Activated CD8-positive, alpha-beta T cell treated with anti-CD3 and anti-CD28 coated beads for 36 hours (primary cell): ENCODE measurements at regions of chr15 and their contacts with region 1.

Region 1: DNA sequence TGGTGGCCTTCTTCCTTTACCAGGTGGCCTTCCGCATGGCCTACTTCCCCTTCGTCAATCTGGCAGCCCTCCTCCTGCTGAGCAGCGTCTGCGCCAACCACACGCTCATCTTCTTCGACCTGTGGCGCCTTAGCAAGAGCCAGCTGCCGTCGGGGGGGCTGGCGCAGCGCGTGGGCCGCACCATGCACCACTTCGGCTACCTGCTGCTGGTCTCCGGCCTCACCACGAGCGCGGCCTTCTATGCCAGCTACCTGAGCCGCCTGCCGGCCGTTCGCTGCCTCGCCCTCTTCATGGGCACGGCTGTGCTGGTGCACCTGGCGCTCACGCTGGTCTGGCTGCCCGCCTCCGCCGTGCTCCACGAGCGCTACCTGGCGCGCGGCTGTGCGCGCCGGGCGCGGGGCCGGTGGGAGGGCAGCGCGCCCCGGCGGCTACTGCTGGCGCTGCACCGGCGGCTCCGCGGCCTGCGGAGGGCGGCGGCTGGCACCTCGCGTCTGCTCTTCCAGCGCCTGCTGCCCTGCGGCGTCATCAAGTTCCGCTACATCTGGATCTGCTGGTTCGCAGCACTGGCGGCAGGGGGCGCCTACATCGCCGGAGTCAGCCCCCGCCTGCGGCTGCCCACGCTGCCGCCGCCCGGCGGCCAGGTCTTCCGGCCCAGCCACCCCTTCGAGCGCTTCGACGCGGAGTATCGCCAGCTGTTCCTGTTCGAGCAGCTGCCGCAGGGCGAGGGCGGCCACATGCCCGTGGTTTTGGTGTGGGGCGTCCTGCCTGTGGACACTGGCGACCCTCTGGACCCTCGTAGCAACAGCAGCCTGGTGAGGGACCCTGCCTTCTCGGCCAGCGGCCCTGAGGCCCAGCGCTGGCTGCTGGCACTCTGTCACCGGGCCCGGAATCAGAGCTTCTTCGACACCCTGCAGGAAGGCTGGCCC is 9.9 kb downstream of the DISP2 start:
- DNase-seq: peak; percentile 92
- ATAC-seq: peak; percentile 98
- H3K4me3 Mint-ChIP-seq: peak overlapping the region; percentile 82
- H3K27ac Mint-ChIP-seq: peak overlapping the region; percentile 79
- H3K4me1 Mint-ChIP-seq: peaks cover 20% of the 10 kb centered on the region
- H3K27me3 Mint-ChIP-seq: no peaks in the 10 kb centered on the region
- CTCF ChIP-seq: peak; percentile 96

Region 2: DNA sequence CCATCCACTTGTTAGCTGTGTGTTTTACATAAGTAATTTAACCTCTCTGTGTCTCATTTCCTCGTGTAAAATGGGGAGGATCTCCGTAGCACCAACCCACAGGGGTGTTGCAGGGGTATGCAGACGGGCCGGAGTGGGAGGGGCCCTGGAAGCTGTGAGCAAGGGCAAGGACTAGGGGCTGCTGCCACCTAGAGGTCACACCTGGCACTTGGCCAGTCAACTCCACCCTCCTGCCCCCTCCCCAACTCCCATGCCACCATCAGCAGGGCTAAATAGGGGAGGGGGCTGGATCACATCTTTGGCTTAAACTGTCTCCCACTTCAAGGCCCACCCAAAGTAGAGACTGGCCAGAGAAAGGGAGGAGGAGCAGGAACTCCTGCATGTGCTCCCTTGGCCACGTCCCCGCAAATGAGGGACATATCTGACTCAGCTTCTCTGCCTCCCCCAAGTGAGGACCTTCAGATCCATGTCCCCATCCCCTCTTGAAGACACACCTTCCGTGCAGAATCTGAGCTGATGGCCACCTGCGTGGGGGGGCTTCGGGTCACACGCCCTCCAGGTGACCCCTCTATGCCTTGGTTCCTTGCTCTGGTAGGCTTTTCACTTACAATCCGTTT is 29.8 kb before region 1 on chr15:
- CTCF ChIA-PET with region 1: interaction called, 83 read pairs
- POLR2A ChIA-PET with region 1: interaction called, 3 read pairs
- intact Hi-C with region 1: no loop called
- DNase-seq: peak; percentile 88
- ATAC-seq: peak; percentile 96
- H3K4me3 Mint-ChIP-seq: no peak overlapping the region
- H3K27ac Mint-ChIP-seq: no peak overlapping the region
- H3K4me1 Mint-ChIP-seq: peaks cover 14% of the 10 kb centered on the region
- H3K27me3 Mint-ChIP-seq: no peaks in the 10 kb centered on the region
- CTCF ChIP-seq: peak; percentile 92

Region 3: DNA sequence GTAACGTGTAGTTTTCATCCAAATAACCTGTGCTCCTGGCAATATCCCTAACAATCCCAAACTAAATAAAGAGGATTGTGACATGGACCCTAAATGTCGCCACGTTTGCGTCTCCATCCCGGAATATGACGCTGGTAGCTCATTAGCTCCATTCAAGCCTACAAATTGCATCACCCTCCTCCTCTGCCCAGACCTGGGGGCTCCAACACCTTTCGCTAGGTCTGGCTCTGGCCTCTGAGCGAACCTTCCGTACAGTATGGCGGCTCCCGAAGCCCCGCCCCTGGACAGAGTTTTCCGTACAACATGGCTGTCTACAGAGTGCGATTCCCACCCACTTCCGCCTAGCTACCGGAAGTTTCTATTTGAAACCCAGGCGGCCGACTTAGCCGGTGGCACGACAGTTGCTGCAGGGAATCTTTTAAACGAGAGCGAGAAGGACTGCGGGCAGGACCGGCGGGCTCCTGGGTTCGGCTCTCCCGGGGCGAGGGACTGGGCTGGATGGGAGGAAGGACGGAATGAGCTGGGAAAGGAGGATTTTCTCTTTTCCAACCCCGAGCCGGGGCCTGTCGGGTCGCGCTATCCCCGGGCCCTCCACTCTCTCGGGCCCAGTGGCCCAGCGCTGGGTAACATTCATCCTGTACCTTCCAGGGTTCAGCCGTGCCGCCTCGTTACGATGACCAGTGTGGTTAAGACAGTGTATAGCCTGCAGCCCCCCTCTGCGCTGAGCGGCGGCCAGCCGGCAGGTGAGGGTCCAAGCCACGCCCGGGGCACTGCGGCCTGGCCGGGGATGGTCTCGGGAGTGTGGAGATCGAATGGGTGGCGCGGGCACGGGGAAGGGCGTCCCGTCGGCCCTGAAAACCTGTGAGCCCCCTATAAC is 14.9 kb after region 1 on chr15 and contains the start of gene KNSTRN:
- CTCF ChIA-PET with region 1: interaction called, 26 read pairs
- POLR2A ChIA-PET with region 1: interaction called, 9 read pairs
- intact Hi-C with region 1: no loop called
- DNase-seq: peak; percentile 98
- ATAC-seq: peak; percentile 100
- H3K4me3 Mint-ChIP-seq: peak within 1 kb of the TSS; percentile 96
- H3K27ac Mint-ChIP-seq: peak within 1 kb of the TSS; percentile 88
- H3K4me1 Mint-ChIP-seq: peaks cover 18% of the 10 kb centered on the region
- H3K27me3 Mint-ChIP-seq: no peaks in the 10 kb centered on the region
- CTCF ChIP-seq: no peak
- total RNA-seq, gene KNSTRN: 54.2 to 55.0 TPM

Region 4: DNA sequence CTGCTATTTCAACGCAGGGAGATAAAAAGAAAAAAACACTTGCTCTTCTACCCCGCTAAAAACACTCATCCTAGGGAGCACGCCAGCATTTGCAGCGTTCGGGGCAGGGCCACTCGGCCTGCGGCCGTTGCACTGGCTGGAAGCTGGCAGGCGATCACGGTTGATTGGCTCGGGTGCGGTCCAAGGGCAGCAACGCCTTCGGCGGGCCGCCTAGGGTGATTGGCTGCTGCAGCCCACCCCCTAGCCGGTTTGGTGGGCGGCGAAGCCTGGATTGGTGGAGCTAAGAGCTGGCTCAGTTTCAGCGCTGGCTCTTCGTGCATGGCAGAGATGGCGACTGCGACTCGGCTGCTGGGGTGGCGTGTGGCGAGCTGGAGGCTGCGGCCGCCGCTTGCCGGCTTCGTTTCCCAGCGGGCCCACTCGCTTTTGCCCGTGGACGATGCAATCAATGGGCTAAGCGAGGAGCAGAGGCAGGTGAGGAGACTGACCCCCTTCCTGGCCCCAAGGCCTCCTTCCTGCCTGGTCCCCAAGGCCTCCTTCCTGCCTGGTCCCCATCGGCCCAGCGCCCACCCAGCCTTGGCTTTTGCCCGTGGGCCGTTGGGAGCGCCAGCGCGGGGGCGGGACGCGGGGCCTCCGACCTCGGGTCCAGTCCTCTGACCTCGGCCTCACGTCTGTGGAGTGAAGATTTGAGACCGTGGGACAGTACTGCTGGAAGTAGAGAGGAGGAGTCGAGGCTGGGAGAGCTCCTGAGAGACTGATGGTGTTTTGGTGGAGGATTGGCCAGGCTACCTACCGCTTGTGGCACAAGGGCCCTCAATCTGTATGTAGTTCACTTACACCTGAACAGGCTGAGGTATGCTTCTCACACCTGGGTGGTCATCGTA is 37.8 kb after region 1 on chr15 and contains the start of gene IVD:
- CTCF ChIA-PET with region 1: interaction called, 33 read pairs
- POLR2A ChIA-PET with region 1: interaction called, 6 read pairs
- intact Hi-C with region 1: no loop called
- DNase-seq: peak; percentile 96
- ATAC-seq: peak; percentile 98
- H3K4me3 Mint-ChIP-seq: peak within 1 kb of the TSS; percentile 77
- H3K27ac Mint-ChIP-seq: peak within 1 kb of the TSS; percentile 95
- H3K4me1 Mint-ChIP-seq: peaks cover 47% of the 10 kb centered on the region
- H3K27me3 Mint-ChIP-seq: no peaks in the 10 kb centered on the region
- CTCF ChIP-seq: no peak
- total RNA-seq, gene IVD: 56.9 to 65.0 TPM

Region 5: DNA sequence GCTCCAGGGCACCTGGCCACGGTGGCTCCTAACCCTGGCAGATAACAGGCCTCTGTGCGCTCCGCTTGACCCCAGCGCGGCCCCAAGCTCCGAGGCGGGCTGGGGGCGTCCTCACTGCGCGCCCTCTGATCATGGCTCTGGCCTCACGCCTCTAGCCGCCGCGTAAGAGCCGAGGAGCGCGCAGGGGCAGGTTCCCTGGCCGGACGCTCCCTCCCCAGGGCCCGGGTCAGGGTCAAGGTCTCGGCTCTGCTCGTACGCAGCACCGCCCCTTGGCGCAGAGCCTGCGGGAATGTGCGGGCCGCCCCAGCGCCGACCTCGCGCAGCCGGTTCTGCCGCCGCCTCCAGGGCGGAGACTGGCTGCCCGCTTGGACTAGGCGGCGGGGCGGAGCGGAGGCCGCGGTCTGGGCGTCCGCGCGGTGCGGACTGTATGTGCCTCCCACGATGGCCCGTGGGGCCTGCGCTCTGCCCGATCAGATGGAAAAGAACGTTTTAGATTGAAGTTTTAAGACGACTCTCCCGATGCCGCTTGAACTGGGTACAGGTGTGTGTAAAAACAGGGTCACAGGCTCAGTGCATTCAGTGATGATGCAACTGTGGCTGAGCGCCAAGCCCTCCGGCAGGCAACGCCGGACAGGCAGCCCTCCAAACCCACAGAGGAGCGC is 143.7 kb after region 1 on chr15:
- CTCF ChIA-PET with region 1: no interaction called
- POLR2A ChIA-PET with region 1: no interaction called
- intact Hi-C with region 1: no loop called
- DNase-seq: peak; percentile 11
- ATAC-seq: peak; percentile 41
- H3K4me3 Mint-ChIP-seq: peak overlapping the region; percentile 67
- H3K27ac Mint-ChIP-seq: no peak overlapping the region
- H3K4me1 Mint-ChIP-seq: peaks cover 19% of the 10 kb centered on the region
- H3K27me3 Mint-ChIP-seq: peaks cover 53% of the 10 kb centered on the region
- CTCF ChIP-seq: no peak